Activated CD8-positive, alpha-beta T cell treated with anti-CD3 and anti-CD28 coated beads, Interleukin-2, amount 10 ng/mL, durations not matched to agents 7 days and 5 days (primary cell): ENCODE measurements at regions of chr6 and their contacts with region 1.

Region 1: GRCh38 chr6:75893058-75893775 is 144.2 kb downstream of the MYO6 start:
- DNase-seq: no peak
- ATAC-seq: no peak
- H3K4me3 Mint-ChIP-seq: no peak overlapping the region
- H3K27ac Mint-ChIP-seq: no peak overlapping the region
- H3K4me1 Mint-ChIP-seq: no peaks in the 10 kb centered on the region
- H3K27me3 Mint-ChIP-seq: no peaks in the 10 kb centered on the region

Region 2: GRCh38 chr6:75855052-75855451 is 38.2 kb before region 1 on chr6:
- CTCF ChIA-PET with region 1: interaction called, 11 read pairs
- POLR2A ChIA-PET with region 1: no interaction called
- DNase-seq: peak; percentile 34
- ATAC-seq: no peak
- H3K4me3 Mint-ChIP-seq: no peak overlapping the region
- H3K27ac Mint-ChIP-seq: no peak overlapping the region
- H3K4me1 Mint-ChIP-seq: no peaks in the 10 kb centered on the region
- H3K27me3 Mint-ChIP-seq: peaks cover 6% of the 10 kb centered on the region

Region 3: GRCh38 chr6:75876152-75876551 is 17.1 kb before region 1 on chr6:
- CTCF ChIA-PET with region 1: interaction called, 19 read pairs
- POLR2A ChIA-PET with region 1: no interaction called
- DNase-seq: no peak
- ATAC-seq: no peak
- H3K4me3 Mint-ChIP-seq: no peak overlapping the region
- H3K27ac Mint-ChIP-seq: no peak overlapping the region
- H3K4me1 Mint-ChIP-seq: no peaks in the 10 kb centered on the region
- H3K27me3 Mint-ChIP-seq: peaks cover 4% of the 10 kb centered on the region

Region 4: GRCh38 chr6:75882734-75883133 is 10.5 kb before region 1 on chr6:
- CTCF ChIA-PET with region 1: interaction called, 19 read pairs
- POLR2A ChIA-PET with region 1: no interaction called
- DNase-seq: no peak
- ATAC-seq: no peak
- H3K4me3 Mint-ChIP-seq: no peak overlapping the region
- H3K27ac Mint-ChIP-seq: no peak overlapping the region
- H3K4me1 Mint-ChIP-seq: no peaks in the 10 kb centered on the region
- H3K27me3 Mint-ChIP-seq: no peaks in the 10 kb centered on the region

Region 5: GRCh38 chr6:75906871-75907270 is 13.7 kb after region 1 on chr6:
- CTCF ChIA-PET with region 1: interaction called, 27 read pairs
- POLR2A ChIA-PET with region 1: no interaction called
- DNase-seq: no peak
- ATAC-seq: no peak
- H3K4me3 Mint-ChIP-seq: no peak overlapping the region
- H3K27ac Mint-ChIP-seq: no peak overlapping the region
- H3K4me1 Mint-ChIP-seq: no peaks in the 10 kb centered on the region
- H3K27me3 Mint-ChIP-seq: no peaks in the 10 kb centered on the region

Region 6: DNA sequence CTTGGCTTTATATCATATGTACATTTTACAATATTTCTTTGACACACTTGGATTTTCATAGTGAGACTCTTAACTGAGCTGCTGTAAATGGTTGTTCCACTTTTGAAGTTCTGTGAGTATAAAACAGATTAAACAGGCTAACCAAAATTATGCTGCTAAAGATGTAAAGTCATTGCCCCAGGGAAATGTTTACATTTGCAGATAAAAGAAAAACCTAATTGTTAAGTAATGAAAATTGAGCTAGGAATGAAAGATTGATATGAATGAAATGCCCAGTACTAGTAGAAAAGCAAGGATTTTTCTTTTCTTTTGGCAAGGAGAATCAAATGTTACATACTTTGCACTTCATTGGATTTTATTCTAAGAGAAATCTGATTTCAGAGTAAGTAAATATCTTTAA is 19.8 kb after region 1 on chr6:
- CTCF ChIA-PET with region 1: interaction called, 27 read pairs
- POLR2A ChIA-PET with region 1: no interaction called
- DNase-seq: no peak
- ATAC-seq: no peak
- H3K4me3 Mint-ChIP-seq: no peak overlapping the region
- H3K27ac Mint-ChIP-seq: no peak overlapping the region
- H3K4me1 Mint-ChIP-seq: no peaks in the 10 kb centered on the region
- H3K27me3 Mint-ChIP-seq: no peaks in the 10 kb centered on the region

Region 7: DNA sequence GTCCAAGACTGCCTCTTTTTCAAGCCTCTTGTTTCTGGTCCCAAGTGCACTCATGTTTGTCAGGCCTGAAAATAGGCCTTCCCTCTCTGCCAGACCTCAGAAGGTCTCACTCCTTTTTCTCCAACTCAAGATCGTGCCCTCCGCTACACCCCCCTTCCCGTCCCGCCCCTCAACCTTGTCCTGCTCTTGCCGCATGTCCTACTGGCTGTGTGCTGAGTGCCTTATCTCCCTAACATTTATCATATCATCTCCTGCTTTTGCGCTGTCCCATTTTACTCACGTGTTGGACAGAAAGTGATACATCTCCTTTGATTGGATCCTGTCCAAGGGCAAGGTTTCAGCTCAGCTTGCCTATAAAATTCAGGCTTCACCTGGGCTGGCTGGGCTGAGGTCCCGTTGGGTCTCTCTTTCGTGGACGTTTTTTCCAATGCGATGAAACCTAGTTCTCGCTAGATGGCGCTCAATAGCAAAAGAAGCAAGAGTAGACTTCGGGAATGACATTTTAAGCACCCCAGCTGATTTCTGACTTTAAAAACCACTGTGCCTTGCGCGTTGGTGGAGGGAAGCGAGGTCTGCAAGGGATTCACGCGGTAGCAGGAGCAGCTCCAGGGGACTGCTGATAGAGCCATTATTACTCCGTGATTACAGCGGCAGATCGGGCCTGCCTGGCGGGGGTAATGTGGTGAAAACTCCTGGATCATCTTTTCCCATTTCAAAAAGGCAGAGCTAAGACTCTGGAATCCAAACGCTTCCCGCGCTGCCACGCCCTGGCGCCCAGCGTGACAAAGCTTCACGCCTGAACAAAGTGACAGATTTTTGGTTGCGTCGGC is 41.6 kb after region 1 on chr6:
- CTCF ChIA-PET with region 1: interaction called, 24 read pairs
- POLR2A ChIA-PET with region 1: no interaction called
- DNase-seq: peak; percentile 38
- ATAC-seq: peak; percentile 58
- H3K4me3 Mint-ChIP-seq: no peak overlapping the region
- H3K27ac Mint-ChIP-seq: no peak overlapping the region
- H3K4me1 Mint-ChIP-seq: peaks cover 1% of the 10 kb centered on the region
- H3K27me3 Mint-ChIP-seq: peaks cover 12% of the 10 kb centered on the region